ENCODE measurements at regions of chr7 and their contacts with region 1.

Region 1: DNA sequence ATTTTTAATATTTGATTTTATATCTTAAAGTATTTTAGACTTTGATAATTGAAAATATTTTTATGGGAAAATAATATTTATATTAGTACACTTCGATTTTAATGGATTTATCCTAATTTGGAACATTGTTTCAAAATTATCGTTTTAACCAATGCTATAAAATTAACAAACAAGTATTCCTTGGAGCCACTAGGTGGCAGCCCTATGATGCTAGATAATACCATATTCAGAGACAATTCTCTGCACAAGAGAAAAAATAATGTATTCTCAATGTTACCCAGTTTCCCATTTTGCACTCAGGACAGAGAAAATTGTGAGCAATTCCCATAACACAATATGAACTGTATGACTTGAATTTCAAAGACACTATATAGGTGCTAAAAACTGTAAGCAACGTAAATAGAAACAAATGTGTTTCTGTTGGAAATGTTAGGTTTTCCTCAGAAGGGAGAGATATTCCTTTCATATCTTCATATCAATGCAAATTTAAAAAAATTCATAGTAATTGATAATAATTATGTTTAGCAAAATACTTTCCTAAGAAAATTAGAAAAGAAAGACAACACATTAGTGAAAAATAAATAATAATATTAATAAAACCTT is 237.8 kb downstream of the SEMA3E start:
- DNase-seq: no peak
- H3K4me3 ChIP-seq: no peak overlapping the region
- H3K27ac ChIP-seq: no peak overlapping the region
- H3K4me1 ChIP-seq: no peaks in the 10 kb centered on the region
- H3K27me3 ChIP-seq: no peaks in the 10 kb centered on the region
- CTCF ChIP-seq: peak; percentile 43 to 68 (median 57)
- POLR2A ChIP-seq: no peak

Region 2: DNA sequence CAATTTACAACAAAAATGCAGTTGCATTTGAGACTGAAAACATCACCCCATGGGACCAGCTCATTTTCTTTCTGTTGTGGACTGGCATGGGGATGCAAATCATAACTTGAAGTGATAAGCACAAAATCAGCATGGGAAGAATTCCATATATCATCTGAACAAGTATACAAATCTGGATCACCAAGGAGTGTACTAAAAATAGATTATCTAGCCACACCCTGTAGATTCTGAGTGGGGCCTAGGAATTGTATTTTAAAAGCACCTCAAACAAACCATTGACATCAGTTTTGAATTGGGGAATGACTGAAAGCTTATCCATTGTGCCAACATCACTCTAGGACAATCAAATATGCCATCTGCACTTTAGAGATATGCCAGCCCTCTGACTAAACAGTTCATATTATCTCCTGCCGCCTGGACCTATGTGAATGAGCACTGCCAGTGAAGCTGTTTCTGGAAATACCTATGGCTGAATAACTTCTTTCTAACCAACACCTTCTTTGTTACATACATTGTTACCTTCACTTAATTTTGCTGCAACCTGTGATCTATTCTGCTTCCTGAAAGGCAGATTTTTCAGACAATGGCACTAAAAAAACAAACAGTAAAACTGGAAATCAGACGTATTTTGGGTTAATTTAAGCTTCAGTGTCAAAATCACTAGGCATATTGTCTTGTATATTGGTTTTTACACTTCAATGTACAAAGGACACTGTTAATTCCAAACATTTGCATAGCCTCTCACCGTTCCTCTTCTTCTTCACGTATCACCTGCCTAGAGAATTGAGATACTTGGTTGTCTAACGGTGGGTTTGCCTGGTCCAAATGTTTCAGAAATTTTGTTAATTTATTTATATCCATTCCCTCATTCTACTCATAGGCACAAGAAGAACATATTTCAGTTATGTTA is 1598.9 kb before region 1 on chr7:
- intact Hi-C with region 1: loop called (anchors 10 kb)
- DNase-seq: no peak
- H3K4me3 ChIP-seq: no peak overlapping the region
- H3K27ac ChIP-seq: no peak overlapping the region
- H3K4me1 ChIP-seq: no peaks in the 10 kb centered on the region
- H3K27me3 ChIP-seq: no peaks in the 10 kb centered on the region
- CTCF ChIP-seq: no peak
- POLR2A ChIP-seq: no peak

Measured in breast epithelium (tissue), 4 donors.